Activated CD4-positive, alpha-beta memory T cell treated with anti-CD3 and anti-CD28 coated beads, Interleukin-2, amount 10 ng/mL, durations not matched to agents 7 days and 5 days (primary cell): ENCODE measurements at regions of chr7 and their contacts with region 1.

Region 1: DNA sequence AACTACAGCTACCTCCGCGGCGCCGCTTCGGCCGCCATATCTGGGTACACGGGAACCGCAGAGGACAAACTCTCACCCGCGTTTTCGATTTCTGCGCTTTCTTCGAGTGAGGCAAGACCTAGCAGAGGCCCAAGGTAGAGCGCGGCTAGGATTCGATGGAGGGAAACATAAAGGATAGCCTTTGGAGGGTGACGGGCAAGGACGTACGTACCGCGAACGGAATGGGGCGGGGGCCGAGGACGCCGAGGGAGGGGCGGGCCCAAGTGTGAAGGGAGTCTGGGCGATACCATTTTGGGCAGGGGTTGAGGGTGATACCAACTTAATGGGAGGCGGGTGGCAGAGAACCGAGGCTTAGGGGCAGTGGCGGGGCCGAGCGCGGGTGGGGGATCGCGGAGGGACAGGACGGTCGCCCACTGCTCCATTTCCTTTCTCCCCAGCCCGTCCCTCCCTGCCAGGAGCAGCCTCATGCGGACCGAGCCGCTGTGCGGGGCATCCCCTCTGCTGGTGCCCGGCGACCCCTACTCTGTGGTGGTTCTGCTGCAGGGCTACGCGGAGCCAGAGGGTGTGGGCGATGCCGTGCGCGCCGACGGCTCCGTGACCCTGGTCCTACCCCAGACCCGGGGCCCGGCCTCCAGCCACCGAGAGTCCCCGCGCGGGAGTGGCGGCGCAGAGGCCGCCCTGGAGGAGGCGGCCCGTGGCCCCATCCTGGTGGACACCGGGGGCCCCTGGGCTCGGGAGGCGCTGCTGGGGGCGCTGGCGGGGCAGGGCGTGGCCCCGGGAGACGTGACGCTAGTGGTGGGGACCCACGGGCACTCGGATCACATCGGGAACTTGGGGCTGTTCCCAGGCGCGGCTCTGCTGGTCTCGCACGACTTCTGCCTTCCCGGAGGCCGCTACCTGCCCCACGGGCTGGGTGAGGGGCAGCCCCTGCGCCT is at the start of gene MBLAC1:
- DNase-seq: peak; percentile 92
- H3K4me3 Mint-ChIP-seq: peak within 1 kb of the TSS; percentile 100
- H3K27ac Mint-ChIP-seq: peak within 1 kb of the TSS; percentile 100
- H3K4me1 Mint-ChIP-seq: peaks cover 37% of the 10 kb centered on the region
- H3K27me3 Mint-ChIP-seq: no peaks in the 10 kb centered on the region
- total RNA-seq, gene MBLAC1: 3.4 to 4.1 TPM

Region 2: DNA sequence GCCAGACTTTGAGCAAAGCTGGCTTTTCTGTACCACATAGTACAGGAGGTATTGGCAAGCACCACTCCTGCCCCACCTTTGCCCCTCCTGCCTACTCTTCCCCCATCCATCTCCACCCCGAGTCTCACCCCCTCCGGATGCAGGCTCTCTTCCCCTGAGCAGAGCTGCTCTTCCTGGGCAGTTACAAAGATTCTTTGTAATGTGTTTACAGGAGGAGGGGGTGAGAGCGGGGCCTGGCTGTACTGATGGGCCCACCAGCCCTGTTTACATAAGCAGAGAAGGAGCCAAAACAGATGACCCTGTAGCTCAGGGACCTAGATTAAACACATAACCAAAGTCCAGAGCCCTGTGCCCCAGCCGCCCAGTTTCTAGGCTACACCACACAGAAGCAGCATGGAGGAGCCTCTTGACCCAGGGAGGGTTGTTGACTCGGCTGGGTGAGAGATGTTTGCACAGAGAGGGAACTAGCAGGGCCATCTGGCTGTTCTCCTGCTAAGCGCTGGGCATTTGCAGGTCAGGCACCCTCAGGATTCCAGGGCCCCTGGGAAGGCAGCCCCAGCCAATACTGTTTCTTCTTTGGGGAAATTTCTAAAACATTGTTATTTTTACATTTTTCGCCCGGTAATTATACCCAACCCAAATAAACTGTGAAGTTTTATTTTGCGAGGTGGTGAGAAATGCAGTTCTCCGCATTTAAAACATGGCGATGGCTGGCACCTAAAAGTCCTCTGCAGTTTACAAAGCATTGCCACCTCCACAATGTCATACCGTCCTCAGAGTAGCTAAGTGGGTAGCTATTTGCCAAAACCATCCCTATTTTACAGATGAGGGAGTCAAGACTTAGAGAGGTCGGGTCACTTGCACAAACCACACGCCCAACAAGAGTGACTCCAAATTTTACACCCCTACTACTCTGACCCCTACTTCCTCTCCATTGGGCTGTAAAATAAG is 123.2 kb before region 1 on chr7:
- CTCF ChIA-PET with region 1: no interaction called
- POLR2A ChIA-PET with region 1: no interaction called
- DNase-seq: no peak
- H3K4me3 Mint-ChIP-seq: no peak overlapping the region
- H3K27ac Mint-ChIP-seq: no peak overlapping the region
- H3K4me1 Mint-ChIP-seq: no peaks in the 10 kb centered on the region
- H3K27me3 Mint-ChIP-seq: peaks cover 5% of the 10 kb centered on the region

Region 3: GRCh38 chr7:100081535-100082102 is 45.6 kb before region 1 on chr7 and contains the start of gene ZNF3:
- CTCF ChIA-PET with region 1: interaction called, 3 read pairs
- POLR2A ChIA-PET with region 1: interaction called, 11 read pairs
- DNase-seq: peak; percentile 98
- H3K4me3 Mint-ChIP-seq: peak within 1 kb of the TSS; percentile 81
- H3K27ac Mint-ChIP-seq: peak within 1 kb of the TSS; percentile 79
- H3K4me1 Mint-ChIP-seq: peaks cover 33% of the 10 kb centered on the region
- H3K27me3 Mint-ChIP-seq: peaks cover 3% of the 10 kb centered on the region
- total RNA-seq, gene ZNF3: 21.1 to 22.1 TPM

Region 4: GRCh38 chr7:100106633-100107032 is 20.6 kb before region 1 on chr7:
- CTCF ChIA-PET with region 1: interaction called, 14 read pairs
- POLR2A ChIA-PET with region 1: interaction called, 81 read pairs
- DNase-seq: no peak
- H3K4me3 Mint-ChIP-seq: no peak overlapping the region
- H3K27ac Mint-ChIP-seq: no peak overlapping the region
- H3K4me1 Mint-ChIP-seq: peaks cover 12% of the 10 kb centered on the region
- H3K27me3 Mint-ChIP-seq: no peaks in the 10 kb centered on the region